OCI-LY7 (cell line): ENCODE measurements at regions of chr1 and their contacts with region 1.

Region 1: GRCh38 chr1:148328884-148329283 is 154.2 kb downstream of the PPIAL4G start:
- DNase-seq: no peak
- H3K4me3 ChIP-seq: no peak overlapping the region
- H3K27ac ChIP-seq: no peak overlapping the region
- H3K4me1 ChIP-seq: peaks cover 6% of the 10 kb centered on the region
- CTCF ChIP-seq: no peak

Region 2: DNA sequence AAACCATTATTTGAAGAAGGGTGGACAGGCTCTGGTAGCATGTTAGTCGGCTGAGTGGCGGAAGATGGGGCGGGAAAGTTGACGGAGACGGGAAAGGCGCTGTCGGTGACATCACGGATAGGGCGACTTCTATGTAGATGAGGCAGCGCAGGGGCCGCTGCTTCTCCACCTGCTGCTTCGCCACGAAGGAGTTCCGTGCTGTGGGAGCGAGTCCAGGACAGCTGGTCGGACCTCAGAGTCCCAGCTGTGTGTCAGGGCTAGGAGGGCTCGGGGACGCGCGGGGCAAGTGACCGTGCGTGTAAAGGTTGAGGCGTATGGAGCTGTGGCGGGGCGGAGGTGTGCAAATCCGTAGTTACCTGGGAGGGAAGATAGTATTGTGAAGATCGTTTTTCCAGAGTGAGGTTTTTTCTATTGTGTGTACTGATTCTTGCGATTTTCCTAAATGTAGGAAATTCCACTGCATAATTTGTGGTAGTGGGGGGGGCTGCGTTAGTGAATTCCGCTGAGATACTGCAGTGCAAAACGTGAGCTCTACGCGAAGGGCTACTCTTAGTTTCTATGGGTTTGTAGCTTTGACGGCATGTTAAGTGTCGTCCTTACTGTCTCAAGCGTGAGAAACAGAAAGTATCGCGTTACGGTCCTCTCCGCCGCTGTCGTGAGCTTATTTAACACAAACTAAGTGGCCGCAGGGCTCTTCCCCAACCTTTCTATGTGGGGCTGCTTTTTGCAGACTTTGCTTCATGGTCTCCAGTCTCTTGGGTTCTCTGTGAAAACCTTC is 65.6 kb before region 1 on chr1:
- CTCF ChIA-PET with region 1: no interaction called
- POLR2A ChIA-PET with region 1: interaction called, 13 read pairs
- intact Hi-C with region 1: loop called (anchors 5 kb)
- DNase-seq: peak; percentile 73
- H3K4me3 ChIP-seq: peak overlapping the region; percentile 67
- H3K27ac ChIP-seq: no peak overlapping the region
- H3K4me1 ChIP-seq: no peaks in the 10 kb centered on the region
- CTCF ChIP-seq: no peak